Activated CD4-positive, alpha-beta T cell treated with anti-CD3 and anti-CD28 coated beads for 36 hours (primary cell): ENCODE measurements at regions of chr17 and their contacts with region 1.

Region 1: DNA sequence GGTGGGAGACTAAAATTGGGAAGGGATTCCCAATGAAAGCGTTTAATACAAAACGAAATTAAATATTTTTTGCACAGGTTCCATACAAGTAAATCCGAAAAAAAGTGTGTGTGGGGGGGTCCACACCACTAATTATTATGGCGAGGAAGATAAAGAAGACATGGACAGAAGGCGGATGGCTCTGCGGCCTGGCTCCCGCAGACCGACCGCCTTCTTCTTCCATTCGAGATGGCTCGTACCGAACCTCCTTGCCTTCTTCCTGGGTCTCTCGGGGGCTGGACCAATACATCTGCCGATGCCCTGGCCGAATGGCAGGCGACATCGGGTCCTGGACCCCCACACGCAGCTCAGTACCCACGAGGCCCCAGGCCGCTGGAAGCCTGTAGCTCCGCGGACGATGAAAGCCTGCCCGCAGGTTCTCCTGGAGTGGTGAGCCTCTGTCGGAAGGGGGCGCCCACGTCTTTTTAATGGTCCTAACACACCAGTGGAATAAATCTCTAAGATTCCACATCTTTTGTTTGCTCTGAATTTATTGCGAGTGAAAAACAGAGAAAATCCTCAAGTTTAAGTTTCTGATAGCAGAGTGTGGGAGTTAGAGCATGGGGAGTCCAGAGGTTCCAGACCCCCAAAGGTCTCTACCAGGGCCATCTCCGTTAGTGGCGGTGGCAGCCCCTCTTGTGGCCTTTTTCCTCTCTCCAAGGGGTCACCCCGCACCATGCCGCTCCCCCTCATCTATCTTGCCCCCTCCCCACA is 1.4 kb downstream of the PRAC2 start:
- DNase-seq: peak; percentile 91
- ATAC-seq: peak; percentile 78
- H3K4me3 Mint-ChIP-seq: peak overlapping the region; percentile 42
- H3K27ac Mint-ChIP-seq: peak overlapping the region; percentile 55
- H3K4me1 Mint-ChIP-seq: peaks cover 32% of the 10 kb centered on the region
- H3K27me3 Mint-ChIP-seq: peaks cover 81% of the 10 kb centered on the region

Region 2: GRCh38 chr17:48671697-48672171 is 52.7 kb before region 1 on chr17:
- CTCF ChIA-PET with region 1: interaction called, 4 read pairs
- POLR2A ChIA-PET with region 1: no interaction called
- intact Hi-C with region 1: loop called in 1 of 2 experiments (anchors 5 kb)
- DNase-seq: peak; percentile 81
- ATAC-seq: peak; percentile 47
- H3K4me3 Mint-ChIP-seq: peak overlapping the region; percentile 9
- H3K27ac Mint-ChIP-seq: peak overlapping the region; percentile 26
- H3K4me1 Mint-ChIP-seq: peaks cover 6% of the 10 kb centered on the region
- H3K27me3 Mint-ChIP-seq: peaks cover 27% of the 10 kb centered on the region

Region 3: DNA sequence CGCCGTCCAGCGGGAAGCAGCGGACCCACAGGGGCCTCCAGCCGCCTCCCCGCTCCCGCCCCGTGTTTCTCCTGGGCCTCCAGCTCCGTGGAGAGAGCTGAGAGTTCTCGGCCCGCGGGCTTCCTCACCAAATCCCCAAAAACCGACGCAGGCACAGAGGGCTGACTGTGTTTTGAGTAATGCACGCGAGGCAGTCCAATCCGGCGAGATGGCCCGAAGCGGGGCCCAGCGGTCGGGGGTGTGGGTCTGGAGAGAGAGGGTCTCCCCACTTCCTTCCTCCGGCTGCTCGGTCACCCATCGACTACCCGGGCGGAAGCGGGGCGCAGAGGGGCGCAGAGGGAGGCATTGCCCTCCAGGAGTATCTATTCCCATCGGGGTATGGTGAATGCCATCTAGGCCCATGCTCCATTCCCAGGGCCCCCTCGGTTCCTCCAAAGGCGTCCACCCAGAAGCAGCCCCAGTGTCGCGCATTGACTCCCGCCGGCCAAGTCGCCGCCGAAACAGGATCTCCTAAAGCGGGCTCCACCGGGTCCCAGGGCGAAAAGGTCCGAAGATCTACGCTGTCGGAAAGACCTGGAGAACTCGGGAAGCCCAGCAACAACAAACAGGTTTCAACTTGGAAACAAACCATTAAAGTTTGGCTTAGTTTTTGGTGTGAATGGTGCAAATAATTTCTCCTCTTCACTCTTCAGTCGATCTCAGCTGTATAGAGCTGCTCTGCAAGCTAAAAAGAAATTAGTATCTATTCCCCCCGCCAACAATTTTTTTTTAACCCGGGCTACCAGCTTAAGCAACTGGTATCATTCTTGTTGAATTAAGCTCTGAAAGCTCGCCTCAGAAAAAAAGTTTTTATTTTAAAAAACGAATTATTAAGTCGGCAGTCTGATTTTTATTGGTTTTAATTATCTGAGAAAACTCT is 23.3 kb after region 1 on chr17:
- CTCF ChIA-PET with region 1: interaction called, 37 read pairs
- POLR2A ChIA-PET with region 1: no interaction called
- intact Hi-C with region 1: loop called (anchors 1 to 2 kb)
- DNase-seq: no peak
- ATAC-seq: no peak
- H3K4me3 Mint-ChIP-seq: no peak overlapping the region
- H3K27ac Mint-ChIP-seq: no peak overlapping the region
- H3K4me1 Mint-ChIP-seq: peaks cover 7% of the 10 kb centered on the region
- H3K27me3 Mint-ChIP-seq: peaks cover 76% of the 10 kb centered on the region

Region 4: GRCh38 chr17:48769009-48769675 is 44.7 kb after region 1 on chr17:
- CTCF ChIA-PET with region 1: interaction called, 11 read pairs
- POLR2A ChIA-PET with region 1: no interaction called
- intact Hi-C with region 1: no loop called
- DNase-seq: no peak
- ATAC-seq: no peak
- H3K4me3 Mint-ChIP-seq: no peak overlapping the region
- H3K27ac Mint-ChIP-seq: no peak overlapping the region
- H3K4me1 Mint-ChIP-seq: no peaks in the 10 kb centered on the region
- H3K27me3 Mint-ChIP-seq: peaks cover 23% of the 10 kb centered on the region

Region 5: DNA sequence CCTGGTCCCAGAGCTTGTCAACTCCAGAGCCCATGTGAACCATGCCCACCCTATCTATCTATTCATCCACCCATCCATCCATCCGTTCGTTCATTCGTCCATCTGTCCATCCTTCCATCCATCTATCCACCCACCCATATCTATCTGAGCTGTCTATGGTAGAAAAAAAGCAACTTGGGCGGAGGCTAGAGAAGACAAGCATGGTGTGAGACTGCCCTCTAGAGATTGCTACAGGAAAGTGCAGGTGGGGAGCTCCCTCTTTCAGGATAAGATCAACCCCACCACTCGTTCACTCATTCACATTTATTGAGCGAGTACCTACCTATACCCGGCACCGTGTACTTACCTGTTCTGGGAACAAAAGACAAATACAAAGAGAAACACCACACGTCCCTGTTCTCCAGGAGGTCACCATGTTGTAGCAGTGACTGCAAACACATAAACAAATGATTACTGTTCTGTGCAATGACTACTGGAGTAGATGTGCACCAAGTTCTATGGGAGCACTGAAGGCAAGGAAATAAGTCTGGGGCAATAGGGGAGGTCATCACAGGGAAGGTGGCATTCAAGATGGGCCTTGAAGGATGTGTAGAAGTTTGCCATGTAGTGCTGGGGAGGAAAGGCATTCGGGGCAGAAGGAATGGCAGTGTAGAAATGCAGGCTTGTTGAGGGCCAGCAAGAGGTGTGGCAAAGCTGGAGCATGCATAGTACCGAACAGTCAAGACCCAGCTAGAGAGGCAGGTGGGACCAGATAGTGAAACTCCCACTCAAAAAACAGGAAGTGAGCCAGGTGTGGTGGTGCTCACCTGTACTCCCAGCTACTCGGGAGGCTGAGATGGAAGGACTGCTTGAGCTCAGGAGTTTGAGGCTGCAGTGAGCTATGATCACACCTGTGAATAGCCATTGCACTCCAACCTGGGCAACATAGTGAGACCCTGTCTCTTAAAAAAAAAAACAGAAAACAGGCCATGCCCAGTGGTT is 154.8 kb after region 1 on chr17:
- CTCF ChIA-PET with region 1: interaction called, 45 read pairs
- POLR2A ChIA-PET with region 1: interaction called, 4 read pairs
- intact Hi-C with region 1: loop called (anchors 1 to 2 kb)
- DNase-seq: peak; percentile 64
- ATAC-seq: peak; percentile 90
- H3K4me3 Mint-ChIP-seq: no peak overlapping the region
- H3K27ac Mint-ChIP-seq: no peak overlapping the region
- H3K4me1 Mint-ChIP-seq: no peaks in the 10 kb centered on the region
- H3K27me3 Mint-ChIP-seq: peaks cover 5% of the 10 kb centered on the region